Left cardiac atrium (tissue), 4 donors: ENCODE measurements at regions of chr14 and their contacts with region 1.

Region 1: GRCh38 chr14:102516531-102517415 is 7.2 kb upstream of the ANKRD9 start:
- DNase-seq: peak; percentile 63
- ATAC-seq: peak; percentile 83 to 87

Region 2: GRCh38 chr14:102362545-102363181 is 154.1 kb before region 1 on chr14 and contains the starts of genes CINP and TECPR2:
- intact Hi-C with region 1: loop called in 1 of 2 experiments (anchors 5 kb)
- DNase-seq: peak; percentile 99
- ATAC-seq: peak; percentile 99 to 100
- total RNA-seq, gene CINP: 30.0 to 31.9 TPM
- total RNA-seq, gene TECPR2: 20.9 to 29.6 TPM

Region 3: GRCh38 chr14:102437997-102438915 is 78.5 kb before region 1 on chr14:
- intact Hi-C with region 1: loop called (anchors 1 to 5 kb)
- DNase-seq: peak; percentile 90
- ATAC-seq: peak; percentile 96 to 98